CD14-positive monocyte (primary cell): ENCODE measurements at regions of chr7 and their contacts with region 1.

Region 1: DNA sequence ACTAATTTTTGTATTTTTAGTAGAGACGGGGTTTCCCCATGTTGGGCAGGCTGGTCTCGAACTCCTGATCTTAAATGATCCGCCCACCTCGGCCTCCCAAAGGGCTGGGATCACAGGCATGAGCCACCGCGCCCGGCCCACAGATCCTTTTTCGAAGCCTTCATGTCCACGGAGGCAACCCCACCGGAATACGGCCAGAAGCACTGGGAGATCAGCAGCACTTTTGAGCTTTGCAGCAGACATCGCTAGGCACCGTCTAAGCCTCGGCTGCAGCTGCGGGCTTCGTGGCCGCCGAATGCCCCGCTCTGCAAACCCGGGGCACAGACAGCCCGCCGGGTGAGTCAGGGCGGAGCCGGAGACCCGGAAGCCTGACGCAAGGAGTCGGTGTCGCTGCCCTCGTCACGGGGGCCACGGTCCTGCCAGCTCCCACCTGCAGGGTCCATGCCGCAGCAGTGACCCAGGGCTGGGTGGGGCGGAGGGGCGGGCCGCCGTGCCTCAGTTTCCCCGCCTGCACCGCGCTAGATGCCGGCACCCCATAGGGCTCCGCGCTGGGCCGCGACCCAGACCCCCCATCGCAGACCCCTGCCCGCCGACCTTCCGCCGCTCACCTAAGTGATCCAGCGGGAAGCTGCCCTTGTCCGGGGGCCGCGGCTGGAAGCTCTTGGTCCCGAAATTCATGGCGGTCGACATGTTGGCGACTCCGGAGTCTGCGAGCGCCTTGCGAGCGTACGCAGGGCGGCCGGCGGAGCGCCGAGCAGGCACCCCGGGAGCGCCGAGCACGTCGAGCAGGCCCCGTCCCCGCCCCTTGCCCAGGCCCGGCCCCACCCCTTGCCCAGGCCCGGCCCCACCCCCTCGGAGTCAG is at the start of gene COX19:
- DNase-seq: peak; percentile 92 to 93 (median 93)
- H3K4me3 ChIP-seq: peak within 1 kb of the TSS; percentile 85 to 89 (median 87)
- H3K4me3 Mint-ChIP-seq: peak within 1 kb of the TSS; percentile 91 to 95
- H3K27ac ChIP-seq: peak within 1 kb of the TSS; percentile 92 to 98
- H3K27ac Mint-ChIP-seq: peak within 1 kb of the TSS; percentile 96 to 97 (median 97)
- H3K4me1 ChIP-seq: peaks cover 28 to 29% of the 10 kb centered on the region in 2 donors
- H3K4me1 Mint-ChIP-seq: peaks cover 29% of the 10 kb centered on the region
- H3K27me3 ChIP-seq: no peaks in the 10 kb centered on the region
- H3K27me3 Mint-ChIP-seq: peaks cover 0 to 3% (median 1%) of the 10 kb centered on the region in 3 donors
- CTCF ChIP-seq: no peak
- polyA plus RNA-seq, gene COX19: 7.4 to 15.0 (median 7.6) TPM

Region 2: DNA sequence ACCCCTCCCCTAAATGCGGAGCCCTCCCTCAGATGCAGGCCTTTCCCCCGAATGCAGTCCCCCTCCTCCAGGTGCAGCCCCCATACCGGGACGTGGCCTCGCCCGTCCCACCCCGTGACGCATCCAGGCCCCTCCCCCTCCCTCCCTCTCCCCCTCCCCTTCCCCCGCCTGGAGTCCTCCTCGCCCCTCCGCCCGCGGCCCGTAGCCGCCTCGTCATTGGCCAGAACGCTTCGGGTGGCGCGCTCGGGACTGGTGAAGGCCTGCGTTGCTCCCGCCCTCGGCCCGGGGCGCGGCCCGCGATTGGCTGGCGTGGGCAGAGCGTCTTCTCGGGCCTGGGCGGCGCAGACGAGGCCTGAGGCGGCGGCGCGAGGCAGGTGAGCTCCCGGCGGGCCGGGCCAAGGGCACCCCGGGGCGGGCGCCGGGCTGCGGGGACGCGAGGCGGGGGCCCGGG is 158.7 kb before region 1 on chr7:
- intact Hi-C with region 1: loop called in 1 of 2 experiments (anchors 10 kb)
- DNase-seq: peak; percentile 90 to 92 (median 91)
- H3K4me3 ChIP-seq: peak overlapping the region; percentile 20 to 82 (median 42)
- H3K4me3 Mint-ChIP-seq: peak overlapping the region; percentile 65 to 71
- H3K27ac ChIP-seq: peak overlapping the region in 1 of 2 donors; percentile 48
- H3K27ac Mint-ChIP-seq: peak overlapping the region in 2 of 7 donors; percentile 58 to 82
- H3K4me1 ChIP-seq: peaks cover 45 to 59% of the 10 kb centered on the region in 2 donors
- H3K4me1 Mint-ChIP-seq: peaks cover 58% of the 10 kb centered on the region
- H3K27me3 ChIP-seq: peaks cover 2 to 26% of the 10 kb centered on the region in 2 donors
- H3K27me3 Mint-ChIP-seq: peaks cover 35 to 56% (median 37%) of the 10 kb centered on the region in 3 donors
- CTCF ChIP-seq: no peak

Region 3: GRCh38 chr7:883055-884021 is 91.7 kb before region 1 on chr7:
- intact Hi-C with region 1: no loop called
- DNase-seq: no peak
- H3K4me3 ChIP-seq: no peak overlapping the region
- H3K4me3 Mint-ChIP-seq: no peak overlapping the region
- H3K27ac ChIP-seq: no peak overlapping the region
- H3K27ac Mint-ChIP-seq: peak overlapping the region in 3 of 7 donors; percentile 2 to 61 (median 16)
- H3K4me1 ChIP-seq: peaks cover 5 to 10% of the 10 kb centered on the region in 2 donors
- H3K4me1 Mint-ChIP-seq: peaks cover 10% of the 10 kb centered on the region
- H3K27me3 ChIP-seq: no peaks in the 10 kb centered on the region
- H3K27me3 Mint-ChIP-seq: no peaks in the 10 kb centered on the region
- CTCF ChIP-seq: no peak

Region 4: GRCh38 chr7:901381-902154 is 73.5 kb before region 1 on chr7:
- intact Hi-C with region 1: loop called in 1 of 2 experiments (anchors 5 kb)
- DNase-seq: peak; percentile 82 to 85 (median 84)
- H3K4me3 ChIP-seq: no peak overlapping the region
- H3K4me3 Mint-ChIP-seq: no peak overlapping the region
- H3K27ac ChIP-seq: peak overlapping the region; percentile 24 to 26
- H3K27ac Mint-ChIP-seq: peak overlapping the region; percentile 26 to 85 (median 63)
- H3K4me1 ChIP-seq: peaks cover 9 to 12% of the 10 kb centered on the region in 2 donors
- H3K4me1 Mint-ChIP-seq: peaks cover 16% of the 10 kb centered on the region
- H3K27me3 ChIP-seq: no peaks in the 10 kb centered on the region
- H3K27me3 Mint-ChIP-seq: no peaks in the 10 kb centered on the region
- CTCF ChIP-seq: no peak

Region 5: DNA sequence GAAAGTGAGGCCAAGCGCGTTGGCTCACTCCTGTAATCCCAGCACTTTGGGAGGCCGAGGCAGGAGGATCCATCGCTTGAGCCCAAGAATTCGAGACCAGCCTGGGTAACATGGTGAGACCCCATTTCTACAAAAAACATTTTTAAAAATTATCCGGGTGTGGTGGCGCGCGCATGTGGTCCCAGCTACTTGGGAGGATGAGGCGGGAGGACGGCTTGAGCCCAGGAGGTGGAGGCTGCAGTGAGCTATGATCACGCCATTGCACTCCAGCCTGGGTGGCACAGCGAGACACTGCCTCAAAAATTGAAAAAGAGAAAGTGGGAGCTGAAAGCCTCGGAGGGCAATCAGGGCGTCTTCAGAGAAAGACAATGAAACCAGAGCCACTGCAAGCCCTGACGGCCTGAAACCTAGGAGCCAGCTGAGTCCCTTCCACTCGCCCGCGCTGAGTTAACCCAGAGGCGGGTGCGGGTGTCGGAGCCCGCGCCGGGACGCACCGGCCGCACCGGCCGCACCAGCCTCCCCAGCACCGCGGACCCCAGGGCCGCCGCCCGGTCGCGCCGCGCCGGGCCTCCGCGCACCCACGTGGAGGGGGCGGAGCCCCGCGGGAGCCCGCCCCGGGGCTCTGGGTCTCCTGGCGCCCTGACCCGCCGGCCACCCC is 162.6 kb after region 1 on chr7:
- intact Hi-C with region 1: loop called in 1 of 2 experiments (anchors 10 kb)
- DNase-seq: peak in 1 of 3 donors; percentile 14
- H3K4me3 ChIP-seq: peak overlapping the region; percentile 74 to 90 (median 76)
- H3K4me3 Mint-ChIP-seq: peak overlapping the region; percentile 83 to 84
- H3K27ac ChIP-seq: peak overlapping the region in 1 of 2 donors; percentile 84
- H3K27ac Mint-ChIP-seq: peak overlapping the region; percentile 25 to 95 (median 86)
- H3K4me1 ChIP-seq: peaks cover 14 to 16% of the 10 kb centered on the region in 2 donors
- H3K4me1 Mint-ChIP-seq: peaks cover 16% of the 10 kb centered on the region
- H3K27me3 ChIP-seq: no peaks in the 10 kb centered on the region
- H3K27me3 Mint-ChIP-seq: peaks cover 0 to 8% (median 3%) of the 10 kb centered on the region in 3 donors
- CTCF ChIP-seq: no peak

Region 6: DNA sequence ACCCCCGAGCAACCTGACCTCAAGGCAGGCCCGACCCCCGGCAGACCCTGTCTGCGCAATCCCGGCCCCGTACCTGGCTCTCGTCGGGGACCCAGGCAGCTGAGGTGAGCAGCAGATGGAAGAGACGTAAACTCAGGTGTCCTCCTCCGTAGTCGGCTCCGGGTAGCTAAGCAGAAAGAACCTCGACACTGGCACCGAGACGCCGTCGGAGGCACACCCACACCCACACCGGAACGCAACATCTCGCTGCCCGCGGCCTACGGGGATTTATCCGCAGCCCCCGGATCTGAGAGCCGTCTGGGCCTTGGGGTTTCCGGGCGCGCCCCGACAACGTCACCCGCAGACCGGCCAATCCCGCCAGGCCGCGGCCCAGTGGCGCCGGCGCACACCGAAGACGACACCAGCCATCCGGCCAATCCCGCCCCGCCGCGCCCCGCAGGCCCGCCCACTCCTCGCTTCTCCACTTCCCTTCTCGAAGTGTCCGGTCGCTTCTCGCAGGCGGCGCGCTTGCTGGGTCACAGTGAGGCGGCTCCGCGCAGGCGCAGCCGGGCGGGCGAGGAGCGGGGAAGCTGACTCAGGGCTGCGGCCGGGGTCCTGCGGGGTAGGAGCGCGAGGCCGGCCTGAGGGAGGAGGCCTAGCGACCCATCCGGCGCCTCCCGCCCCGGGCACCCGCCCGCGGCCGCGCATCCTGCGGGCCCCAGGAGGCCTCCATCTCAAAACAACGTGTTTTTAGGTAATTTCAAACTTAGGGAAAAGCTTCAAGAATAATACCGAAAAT is 185.0 kb after region 1 on chr7 and contains the start of gene ZFAND2A:
- intact Hi-C with region 1: loop called in 1 of 2 experiments (anchors 5 kb)
- DNase-seq: peak; percentile 97 to 99 (median 99)
- H3K4me3 ChIP-seq: peak within 1 kb of the TSS; percentile 75 to 99 (median 95)
- H3K4me3 Mint-ChIP-seq: peak within 1 kb of the TSS; percentile 85 to 93
- H3K27ac ChIP-seq: peak within 1 kb of the TSS; percentile 79 to 91
- H3K27ac Mint-ChIP-seq: peak within 1 kb of the TSS; percentile 90 to 98 (median 95)
- H3K4me1 ChIP-seq: peaks cover 17 to 22% of the 10 kb centered on the region in 2 donors
- H3K4me1 Mint-ChIP-seq: peaks cover 23% of the 10 kb centered on the region
- H3K27me3 ChIP-seq: no peaks in the 10 kb centered on the region
- H3K27me3 Mint-ChIP-seq: peaks cover 0 to 2% (median 0%) of the 10 kb centered on the region in 3 donors
- CTCF ChIP-seq: no peak
- polyA plus RNA-seq, gene ZFAND2A: 30.6 to 126 (median 35.1) TPM